Right cardiac atrium (tissue), 5 donors: ENCODE measurements at regions of chr1 and their contacts with region 1.

Region 1: GRCh38 chr1:30779294-30780071 is 21.9 kb upstream of the LAPTM5 start:
- DNase-seq: peak; percentile 80 to 94 (median 93)
- ATAC-seq: peak; percentile 67 to 75
- H3K4me3 ChIP-seq: no peak overlapping the region
- H3K27ac ChIP-seq: no peak overlapping the region
- H3K4me1 ChIP-seq: no peaks in the 10 kb centered on the region
- H3K27me3 ChIP-seq: no peaks in the 10 kb centered on the region

Region 2: GRCh38 chr1:30718636-30719405 is 60.7 kb before region 1 on chr1:
- intact Hi-C with region 1: loop called (anchors 1 to 2 kb)
- DNase-seq: peak; percentile 80 to 93 (median 90)
- ATAC-seq: peak; percentile 89
- H3K4me3 ChIP-seq: peak overlapping the region; percentile 19
- H3K27ac ChIP-seq: peak overlapping the region; percentile 96
- H3K4me1 ChIP-seq: no peaks in the 10 kb centered on the region
- H3K27me3 ChIP-seq: no peaks in the 10 kb centered on the region

Region 3: GRCh38 chr1:30888391-30888790 is 108.9 kb after region 1 on chr1:
- intact Hi-C with region 1: no loop called
- DNase-seq: peak; percentile 75 to 92 (median 91)
- ATAC-seq: peak; percentile 78 to 92
- H3K4me3 ChIP-seq: no peak overlapping the region
- H3K27ac ChIP-seq: no peak overlapping the region
- H3K4me1 ChIP-seq: peaks cover 14% of the 10 kb centered on the region
- H3K27me3 ChIP-seq: no peaks in the 10 kb centered on the region

Region 4: DNA sequence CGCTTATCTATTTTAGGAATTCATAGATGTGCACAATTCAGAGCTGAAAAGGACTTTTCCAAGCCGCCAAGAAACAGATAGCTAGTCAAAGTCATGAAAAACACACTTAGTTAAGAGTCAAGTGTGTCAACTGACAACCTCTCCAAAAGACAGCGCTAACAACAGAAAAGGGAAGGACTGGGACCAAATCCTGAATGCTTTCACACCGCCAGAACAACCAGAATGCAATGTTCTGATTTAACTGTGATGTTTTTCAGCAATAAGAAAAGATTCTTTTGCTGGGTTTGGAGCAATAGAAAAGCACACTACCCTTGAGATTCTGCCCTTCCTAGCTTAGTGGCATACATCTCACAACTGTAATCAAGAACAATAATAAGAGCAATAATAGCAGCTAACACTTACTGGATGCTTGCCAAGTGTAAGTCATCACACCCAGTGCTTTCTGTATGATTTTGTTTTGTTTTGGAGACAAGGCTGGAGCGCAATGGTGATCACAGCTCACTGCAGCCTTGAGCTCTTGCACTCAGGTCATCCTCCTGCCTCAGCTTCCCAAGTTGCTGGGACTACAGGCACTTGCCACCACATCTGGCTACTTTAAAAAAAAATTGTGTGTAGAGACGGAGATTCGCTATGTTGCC is 163.0 kb after region 1 on chr1:
- intact Hi-C with region 1: no loop called
- DNase-seq: no peak
- ATAC-seq: no peak
- H3K4me3 ChIP-seq: no peak overlapping the region
- H3K27ac ChIP-seq: no peak overlapping the region
- H3K4me1 ChIP-seq: no peaks in the 10 kb centered on the region
- H3K27me3 ChIP-seq: no peaks in the 10 kb centered on the region